ENCODE measurements at regions of chr13 and their contacts with region 1.

Region 1: DNA sequence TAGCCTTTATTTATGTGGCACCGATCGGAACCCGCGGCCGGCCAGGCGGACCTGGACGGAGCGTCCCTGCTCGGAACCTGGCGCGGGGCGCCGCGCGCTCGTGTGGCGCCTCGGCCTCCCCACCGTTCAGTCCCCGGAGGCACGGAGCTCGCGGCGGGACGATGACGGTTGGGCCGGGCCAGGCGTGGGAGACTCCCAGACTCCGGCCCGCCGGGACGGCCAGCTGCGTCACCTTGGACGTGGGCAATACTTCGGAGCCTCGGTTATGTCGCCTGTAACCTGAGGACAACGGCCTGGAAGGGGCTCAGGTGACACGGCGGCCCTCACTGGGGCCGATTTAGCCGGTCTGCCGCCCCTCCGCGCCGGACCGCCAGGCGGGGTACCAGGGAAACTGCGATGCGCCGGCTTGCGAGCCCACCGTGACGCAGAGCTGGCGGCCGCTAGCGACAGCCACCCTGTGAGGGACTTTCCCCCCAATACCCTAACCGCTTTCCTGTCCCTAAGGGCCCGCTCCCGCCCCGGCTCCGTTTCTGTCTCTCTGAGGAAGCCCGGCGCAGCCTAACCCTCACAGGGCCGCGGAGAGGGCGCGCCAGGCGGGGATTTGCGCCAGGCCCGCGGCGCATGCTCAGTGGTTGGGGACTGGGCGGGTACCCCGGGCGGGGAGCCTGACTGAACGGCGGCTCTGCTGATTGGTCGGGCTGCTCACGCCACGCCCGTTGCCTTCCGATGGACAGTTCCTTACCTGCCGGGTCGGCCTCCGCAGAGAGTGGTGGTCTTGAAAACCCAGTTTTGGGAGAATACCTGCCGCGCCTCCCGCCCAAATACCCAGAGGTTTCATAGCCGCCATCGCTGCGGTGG is 109.5 kb upstream of the DOCK9 start:
- DNase-seq: peak; percentile 91 to 94 (median 92)
- H3K4me3 ChIP-seq: peak overlapping the region; percentile 37 to 88
- H3K4me3 Mint-ChIP-seq: peak overlapping the region; percentile 96 to 99 (median 98)
- H3K27ac ChIP-seq: peak overlapping the region; percentile 83
- H3K27ac Mint-ChIP-seq: peak overlapping the region; percentile 99 to 100 (median 99)
- H3K4me1 ChIP-seq: peaks cover 40% of the 10 kb centered on the region
- H3K4me1 Mint-ChIP-seq: peaks cover 27 to 53% (median 39%) of the 10 kb centered on the region in 4 donors
- H3K27me3 ChIP-seq: no peaks in the 10 kb centered on the region
- H3K27me3 Mint-ChIP-seq: no peaks in the 10 kb centered on the region

Region 2: GRCh38 chr13:98910501-98910951 is 176.8 kb before region 1 on chr13:
- CTCF ChIA-PET with region 1: no interaction called
- POLR2A ChIA-PET with region 1: interaction called, 7 read pairs
- intact Hi-C with region 1: loop called (anchors 5 kb)
- DNase-seq: peak; percentile 30 to 72 (median 34)
- H3K4me3 ChIP-seq: no peak overlapping the region
- H3K4me3 Mint-ChIP-seq: peak overlapping the region in 7 of 8 donors; percentile 35 to 81 (median 48)
- H3K27ac ChIP-seq: peak overlapping the region; percentile 17
- H3K27ac Mint-ChIP-seq: peak overlapping the region; percentile 62 to 97 (median 92)
- H3K4me1 ChIP-seq: peaks cover 15% of the 10 kb centered on the region
- H3K4me1 Mint-ChIP-seq: peaks cover 17 to 44% (median 31%) of the 10 kb centered on the region in 4 donors
- H3K27me3 ChIP-seq: no peaks in the 10 kb centered on the region
- H3K27me3 Mint-ChIP-seq: no peaks in the 10 kb centered on the region

Region 3: GRCh38 chr13:98972627-98973026 is 114.7 kb before region 1 on chr13:
- CTCF ChIA-PET with region 1: no interaction called
- POLR2A ChIA-PET with region 1: no interaction called
- intact Hi-C with region 1: no loop called
- DNase-seq: no peak
- H3K4me3 ChIP-seq: no peak overlapping the region
- H3K4me3 Mint-ChIP-seq: no peak overlapping the region
- H3K27ac ChIP-seq: no peak overlapping the region
- H3K27ac Mint-ChIP-seq: peak overlapping the region in 2 of 7 donors; percentile 22 to 48
- H3K4me1 ChIP-seq: peaks cover 39% of the 10 kb centered on the region
- H3K4me1 Mint-ChIP-seq: peaks cover 37 to 73% (median 54%) of the 10 kb centered on the region in 4 donors
- H3K27me3 ChIP-seq: no peaks in the 10 kb centered on the region
- H3K27me3 Mint-ChIP-seq: no peaks in the 10 kb centered on the region

Region 4: GRCh38 chr13:99041788-99042187 is 45.5 kb before region 1 on chr13:
- CTCF ChIA-PET with region 1: interaction called, 5 read pairs
- POLR2A ChIA-PET with region 1: interaction called, 226 read pairs
- intact Hi-C with region 1: loop called (anchors 1 kb)
- DNase-seq: peak in 1 of 5 donors; percentile 41
- H3K4me3 ChIP-seq: no peak overlapping the region
- H3K4me3 Mint-ChIP-seq: peak overlapping the region; percentile 2 to 75 (median 36)
- H3K27ac ChIP-seq: peak overlapping the region; percentile 16
- H3K27ac Mint-ChIP-seq: peak overlapping the region; percentile 65 to 98 (median 94)
- H3K4me1 ChIP-seq: peaks cover 72% of the 10 kb centered on the region
- H3K4me1 Mint-ChIP-seq: peaks cover 65 to 91% (median 78%) of the 10 kb centered on the region in 4 donors
- H3K27me3 ChIP-seq: no peaks in the 10 kb centered on the region
- H3K27me3 Mint-ChIP-seq: no peaks in the 10 kb centered on the region

Region 5: GRCh38 chr13:99051768-99052455 is 35.4 kb before region 1 on chr13:
- CTCF ChIA-PET with region 1: interaction called, 15 read pairs
- POLR2A ChIA-PET with region 1: interaction called, 226 read pairs
- intact Hi-C with region 1: loop called (anchors 1 kb)
- DNase-seq: peak in 4 of 5 donors; percentile 55 to 66 (median 62)
- H3K4me3 ChIP-seq: peak overlapping the region; percentile 36 to 57
- H3K4me3 Mint-ChIP-seq: peak overlapping the region; percentile 70 to 89 (median 85)
- H3K27ac ChIP-seq: peak overlapping the region; percentile 38
- H3K27ac Mint-ChIP-seq: peak overlapping the region; percentile 86 to 97 (median 94)
- H3K4me1 ChIP-seq: peaks cover 97% of the 10 kb centered on the region
- H3K4me1 Mint-ChIP-seq: peaks cover 70 to 97% (median 85%) of the 10 kb centered on the region in 4 donors
- H3K27me3 ChIP-seq: no peaks in the 10 kb centered on the region
- H3K27me3 Mint-ChIP-seq: no peaks in the 10 kb centered on the region

Region 6: GRCh38 chr13:99075268-99076191 is 11.8 kb before region 1 on chr13:
- CTCF ChIA-PET with region 1: interaction called, 8 read pairs
- POLR2A ChIA-PET with region 1: interaction called, 3 read pairs
- intact Hi-C with region 1: loop called (anchors 1 kb)
- DNase-seq: peak; percentile 48 to 70 (median 50)
- H3K4me3 ChIP-seq: no peak overlapping the region
- H3K4me3 Mint-ChIP-seq: peak overlapping the region; percentile 68 to 79 (median 72)
- H3K27ac ChIP-seq: peak overlapping the region; percentile 55
- H3K27ac Mint-ChIP-seq: peak overlapping the region; percentile 88 to 96 (median 92)
- H3K4me1 ChIP-seq: peaks cover 68% of the 10 kb centered on the region
- H3K4me1 Mint-ChIP-seq: peaks cover 59 to 93% (median 75%) of the 10 kb centered on the region in 4 donors
- H3K27me3 ChIP-seq: no peaks in the 10 kb centered on the region
- H3K27me3 Mint-ChIP-seq: no peaks in the 10 kb centered on the region

Region 7: DNA sequence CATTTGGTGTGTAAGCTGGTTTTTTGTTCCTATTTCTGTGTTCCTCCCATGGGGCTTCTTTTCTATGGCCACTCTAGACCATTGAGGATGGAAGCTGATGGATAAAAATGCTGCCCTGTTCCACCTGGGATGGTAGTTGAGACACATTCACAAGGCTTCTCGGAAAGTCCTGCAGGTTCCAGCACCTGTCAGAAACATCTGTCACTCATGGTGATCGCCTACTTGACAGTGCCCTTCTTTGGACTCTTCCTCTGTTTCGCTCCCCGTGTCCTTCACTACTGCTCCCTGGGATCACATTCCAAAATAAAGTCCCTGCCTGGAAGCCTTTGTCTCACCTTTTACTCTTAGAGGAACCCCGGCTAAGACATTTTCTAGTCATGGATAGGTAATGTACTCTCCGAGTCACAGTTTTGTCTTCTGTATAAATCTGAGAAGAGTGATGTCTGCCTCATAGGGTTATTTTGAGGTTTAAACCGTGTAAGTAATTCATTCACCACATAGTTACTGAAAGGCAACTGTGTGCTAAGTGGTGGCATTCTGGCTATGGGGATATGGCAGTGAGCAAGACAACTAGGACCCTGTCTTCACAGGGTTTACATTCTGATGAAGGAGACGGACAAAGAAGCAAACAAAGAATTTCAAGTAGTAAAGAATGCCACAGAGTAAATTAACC is 134.4 kb after region 1 on chr13:
- CTCF ChIA-PET with region 1: no interaction called
- POLR2A ChIA-PET with region 1: interaction called, 3 read pairs
- intact Hi-C with region 1: loop called (anchors 1 kb)
- DNase-seq: no peak
- H3K4me3 ChIP-seq: no peak overlapping the region
- H3K4me3 Mint-ChIP-seq: peak overlapping the region in 7 of 8 donors; percentile 9 to 71 (median 50)
- H3K27ac ChIP-seq: peak overlapping the region; percentile 29
- H3K27ac Mint-ChIP-seq: peak overlapping the region; percentile 71 to 92 (median 86)
- H3K4me1 ChIP-seq: peaks cover 98% of the 10 kb centered on the region
- H3K4me1 Mint-ChIP-seq: peaks cover 75 to 98% (median 89%) of the 10 kb centered on the region in 4 donors
- H3K27me3 ChIP-seq: no peaks in the 10 kb centered on the region
- H3K27me3 Mint-ChIP-seq: no peaks in the 10 kb centered on the region

Region 8: GRCh38 chr13:99501184-99501847 is 414.0 kb after region 1 on chr13 and contains the start of gene TM9SF2:
- CTCF ChIA-PET with region 1: no interaction called
- POLR2A ChIA-PET with region 1: interaction called, 3 read pairs
- intact Hi-C with region 1: loop called (anchors 2 kb)
- DNase-seq: peak; percentile 96 to 98 (median 97)
- H3K4me3 ChIP-seq: peak within 1 kb of the TSS; percentile 57 to 72
- H3K4me3 Mint-ChIP-seq: peak within 1 kb of the TSS; percentile 89 to 99 (median 98)
- H3K27ac ChIP-seq: peak within 1 kb of the TSS; percentile 86
- H3K27ac Mint-ChIP-seq: peak within 1 kb of the TSS; percentile 98 to 99 (median 98)
- H3K4me1 ChIP-seq: peaks cover 86% of the 10 kb centered on the region
- H3K4me1 Mint-ChIP-seq: peaks cover 49 to 94% (median 71%) of the 10 kb centered on the region in 4 donors
- H3K27me3 ChIP-seq: no peaks in the 10 kb centered on the region
- H3K27me3 Mint-ChIP-seq: no peaks in the 10 kb centered on the region
- total RNA-seq, gene TM9SF2: 60.0 to 64.2 TPM